ENCODE measurements at regions of chr3 and their contacts with region 1.

Region 1: GRCh38 chr3:67790043-67790442 is 135.6 kb upstream of the SUCLG2 start:
- DNase-seq: peak; percentile 53 to 90
- H3K4me3 ChIP-seq: no peak overlapping the region
- H3K27ac ChIP-seq: no peak overlapping the region
- H3K4me1 ChIP-seq: no peaks in the 10 kb centered on the region
- H3K27me3 ChIP-seq: no peaks in the 10 kb centered on the region
- CTCF ChIP-seq: peak; percentile 52 to 87 (median 86)
- EP300 ChIP-seq: no peak
- POLR2A ChIP-seq: no peak
- RAD21 ChIP-seq: peak; percentile 95

Region 2: GRCh38 chr3:67601911-67602608 is 188.0 kb before region 1 on chr3:
- CTCF ChIA-PET with region 1: interaction called, 17 read pairs
- POLR2A ChIA-PET with region 1: no interaction called
- DNase-seq: no peak
- H3K4me3 ChIP-seq: no peak overlapping the region
- H3K27ac ChIP-seq: no peak overlapping the region
- H3K4me1 ChIP-seq: peaks cover 0 to 3% (median 0%) of the 10 kb centered on the region in 4 experiments; a peak in 1 of 7 replicates
- H3K27me3 ChIP-seq: no peaks in the 10 kb centered on the region
- CTCF ChIP-seq: no peak
- EP300 ChIP-seq: no peak
- POLR2A ChIP-seq: no peak
- RAD21 ChIP-seq: no peak

Region 3: DNA sequence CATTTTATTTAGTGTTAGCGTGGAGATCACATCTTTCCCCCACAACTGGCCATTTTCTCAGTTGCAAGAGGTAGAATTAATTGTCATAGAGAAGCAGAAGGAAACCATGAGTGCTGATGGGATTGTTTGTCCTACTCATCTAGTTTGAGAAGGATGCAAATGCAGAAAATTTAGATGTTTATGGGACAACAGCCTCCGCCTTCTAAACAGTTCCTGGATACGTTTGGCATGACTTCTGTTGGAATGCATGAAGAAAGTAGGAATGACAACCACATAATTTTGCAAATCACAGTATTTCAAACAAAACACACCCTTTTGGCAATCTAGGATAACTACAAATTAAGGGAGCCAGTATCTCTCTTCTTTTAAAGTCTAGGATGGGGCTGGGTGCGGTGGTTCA is 104.5 kb after region 1 on chr3:
- CTCF ChIA-PET with region 1: no interaction called
- POLR2A ChIA-PET with region 1: no interaction called
- DNase-seq: no peak
- H3K4me3 ChIP-seq: no peak overlapping the region
- H3K27ac ChIP-seq: no peak overlapping the region
- H3K4me1 ChIP-seq: no peaks in the 10 kb centered on the region
- H3K27me3 ChIP-seq: no peaks in the 10 kb centered on the region
- CTCF ChIP-seq: no peak
- EP300 ChIP-seq: no peak
- POLR2A ChIP-seq: no peak
- RAD21 ChIP-seq: no peak

Measured in H1 (cell line).